ENCODE measurements at regions of chr15 and their contacts with region 1.

Region 1: GRCh38 chr15:81939604-81940440 is 106.0 kb downstream of the MEX3B start:
- DNase-seq: no peak
- H3K4me3 ChIP-seq: no peak overlapping the region
- H3K27ac ChIP-seq: no peak overlapping the region
- H3K4me1 ChIP-seq: no peaks in the 10 kb centered on the region
- H3K27me3 ChIP-seq: no peaks in the 10 kb centered on the region
- CTCF ChIP-seq: peak; percentile 41 to 51 (median 50)
- EP300 ChIP-seq: no peak
- POLR2A ChIP-seq: no peak

Region 2: GRCh38 chr15:81480645-81481053 is 459.2 kb before region 1 on chr15:
- intact Hi-C with region 1: loop called (anchors 5 kb)
- DNase-seq: no peak
- H3K4me3 ChIP-seq: no peak overlapping the region
- H3K27ac ChIP-seq: no peak overlapping the region
- H3K4me1 ChIP-seq: peaks cover 0 to 4% (median 1%) of the 10 kb centered on the region in 4 donors
- H3K27me3 ChIP-seq: no peaks in the 10 kb centered on the region
- CTCF ChIP-seq: peak; percentile 82 to 93 (median 86)
- EP300 ChIP-seq: no peak
- POLR2A ChIP-seq: no peak

Measured in esophagus muscularis mucosa (tissue), 4 donors.